A673 (cell line): ENCODE measurements at regions of chr15 and their contacts with region 1.

Region 1: GRCh38 chr15:45307230-45307924 is 55.3 kb downstream of the SLC28A2 start:
- DNase-seq: peak; percentile 56
- H3K4me3 ChIP-seq: peak overlapping the region; percentile 15
- H3K27ac ChIP-seq: no peak overlapping the region
- H3K4me1 ChIP-seq: no peaks in the 10 kb centered on the region
- H3K27me3 ChIP-seq: peaks cover 4% of the 10 kb centered on the region
- CTCF ChIP-seq: peak; percentile 66

Region 2: GRCh38 chr15:45402162-45402954 is 95.0 kb after region 1 on chr15:
- CTCF ChIA-PET with region 1: no interaction called
- POLR2A ChIA-PET with region 1: no interaction called
- intact Hi-C with region 1: loop called (anchors 2 kb)
- DNase-seq: peak; percentile 99
- H3K4me3 ChIP-seq: peak overlapping the region; percentile 95
- H3K27ac ChIP-seq: peak overlapping the region; percentile 89
- H3K4me1 ChIP-seq: peaks cover 17% of the 10 kb centered on the region
- H3K27me3 ChIP-seq: peaks cover 6% of the 10 kb centered on the region
- CTCF ChIP-seq: no peak

Region 3: DNA sequence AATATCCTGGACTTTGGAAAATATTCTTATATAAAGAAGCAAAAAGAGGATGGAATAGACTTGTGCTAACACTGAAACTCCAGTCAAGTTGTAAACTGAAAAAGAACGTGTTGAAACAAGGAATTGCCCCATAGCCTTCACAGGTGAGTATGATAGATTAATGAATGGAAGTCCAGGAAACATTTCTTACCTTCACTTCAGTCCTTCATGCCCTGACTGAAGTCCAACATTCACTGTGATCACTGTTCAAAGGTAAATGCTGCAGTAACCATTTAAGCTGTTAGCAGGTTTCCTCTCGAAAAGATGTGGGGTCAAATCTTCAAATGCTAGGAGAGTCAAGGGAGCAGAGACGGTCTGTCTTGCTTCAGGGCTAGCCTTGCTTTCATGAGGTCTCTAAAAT is 169.0 kb after region 1 on chr15:
- CTCF ChIA-PET with region 1: no interaction called
- POLR2A ChIA-PET with region 1: no interaction called
- intact Hi-C with region 1: no loop called
- DNase-seq: no peak
- H3K4me3 ChIP-seq: no peak overlapping the region
- H3K27ac ChIP-seq: no peak overlapping the region
- H3K4me1 ChIP-seq: no peaks in the 10 kb centered on the region
- H3K27me3 ChIP-seq: no peaks in the 10 kb centered on the region
- CTCF ChIP-seq: no peak

Region 4: DNA sequence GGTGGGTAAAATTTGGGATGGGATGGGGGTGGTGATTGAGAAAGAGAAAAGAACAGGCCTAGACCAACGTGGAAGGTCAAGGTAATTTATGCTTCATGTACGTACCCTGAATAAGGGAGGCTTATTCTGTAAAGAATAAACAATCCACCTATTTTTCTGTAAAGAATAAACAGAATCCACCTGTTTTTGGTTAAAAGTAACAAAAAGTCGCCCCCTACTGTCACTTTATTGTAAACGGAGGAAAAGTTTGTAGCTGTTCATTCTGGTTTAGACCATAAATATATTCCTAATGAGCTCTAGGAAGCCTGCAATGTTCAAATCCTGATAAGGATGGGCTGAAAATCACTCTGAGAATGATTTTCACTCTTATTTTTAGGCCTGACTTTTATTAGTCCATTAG is 303.9 kb after region 1 on chr15:
- CTCF ChIA-PET with region 1: no interaction called
- POLR2A ChIA-PET with region 1: no interaction called
- intact Hi-C with region 1: loop called (anchors 10 kb)
- DNase-seq: peak; percentile 40
- H3K4me3 ChIP-seq: no peak overlapping the region
- H3K27ac ChIP-seq: no peak overlapping the region
- H3K4me1 ChIP-seq: no peaks in the 10 kb centered on the region
- H3K27me3 ChIP-seq: no peaks in the 10 kb centered on the region
- CTCF ChIP-seq: peak; percentile 62